HEK293 (cell line): ENCODE measurements at regions of chr6 and their contacts with region 1.

Region 1: DNA sequence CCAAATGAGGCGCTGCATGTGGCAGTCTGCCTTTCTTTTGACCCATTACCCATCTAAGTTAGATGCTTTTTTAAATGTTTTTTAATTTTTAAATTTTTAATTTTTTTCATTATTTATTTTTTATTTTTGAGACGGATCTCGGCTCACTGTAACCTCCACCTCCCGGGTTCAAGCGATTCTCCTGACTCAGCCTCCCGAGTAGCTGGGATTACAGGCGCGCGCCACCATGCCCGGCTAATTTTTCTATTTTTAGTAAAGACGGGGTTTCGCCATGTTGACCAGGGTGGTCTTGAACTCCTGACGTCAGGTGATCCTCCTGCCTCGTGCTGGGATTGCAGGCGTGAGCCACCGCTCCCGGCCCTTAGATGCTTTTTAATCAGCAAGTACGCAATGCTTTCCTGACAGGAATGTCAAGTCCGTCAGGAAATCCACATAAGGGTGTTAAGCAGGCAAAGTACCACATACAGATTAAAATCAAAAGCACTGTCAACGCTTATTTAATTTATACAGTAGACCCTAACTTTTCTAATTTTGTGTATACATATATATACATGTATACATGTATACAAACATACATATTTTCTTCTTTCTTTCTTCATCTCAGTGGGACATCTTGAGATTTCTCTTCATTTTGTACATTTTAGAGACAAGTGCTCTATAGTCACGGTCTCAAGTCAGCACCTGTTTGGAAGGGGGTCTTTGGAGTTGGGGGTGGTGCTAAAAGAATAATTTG is 995 bp upstream of the GSTA4 start:
- H3K4me3 ChIP-seq: peak overlapping the region; percentile 33
- H3K27ac ChIP-seq: no peak overlapping the region
- H3K4me1 ChIP-seq: no peaks in the 10 kb centered on the region
- CTCF ChIP-seq: no peak

Region 2: GRCh38 chr6:52984247-52984646 is 11.8 kb before region 1 on chr6:
- CTCF ChIA-PET with region 1: interaction called, 22 read pairs
- POLR2A ChIA-PET with region 1: interaction called, 9 read pairs
- H3K4me3 ChIP-seq: no peak overlapping the region
- H3K27ac ChIP-seq: no peak overlapping the region
- H3K4me1 ChIP-seq: no peaks in the 10 kb centered on the region
- CTCF ChIP-seq: no peak

Region 3: GRCh38 chr6:53035549-53036213 is 39.6 kb after region 1 on chr6:
- CTCF ChIA-PET with region 1: no interaction called
- POLR2A ChIA-PET with region 1: no interaction called
- H3K4me3 ChIP-seq: no peak overlapping the region
- H3K27ac ChIP-seq: no peak overlapping the region
- H3K4me1 ChIP-seq: no peaks in the 10 kb centered on the region
- CTCF ChIP-seq: no peak

Region 4: DNA sequence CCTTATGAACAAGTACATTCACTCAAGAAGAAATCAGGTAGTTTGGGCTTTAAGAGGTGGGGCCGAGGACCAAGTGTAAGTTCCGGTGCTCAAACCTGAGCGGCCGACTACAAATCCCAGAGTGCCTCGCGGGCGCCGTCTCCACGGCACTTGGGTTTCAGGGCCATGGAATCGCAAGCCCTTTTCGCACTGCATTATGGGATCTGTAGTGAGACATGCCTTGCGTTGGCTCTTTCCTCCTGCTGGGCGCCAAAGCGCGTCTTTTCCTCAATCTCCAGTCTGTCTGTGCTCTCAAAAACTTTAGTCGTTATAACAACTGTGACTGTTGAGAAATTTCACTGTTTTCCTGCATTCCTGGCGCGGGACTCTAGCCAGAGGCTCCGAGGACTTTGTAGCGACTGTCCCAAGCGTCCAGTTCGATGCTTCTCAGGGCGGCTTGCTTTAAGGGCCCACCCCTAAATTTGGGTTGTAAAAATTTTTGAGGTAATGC is 68.7 kb after region 1 on chr6:
- CTCF ChIA-PET with region 1: interaction called, 20 read pairs
- POLR2A ChIA-PET with region 1: interaction called, 32 read pairs
- H3K4me3 ChIP-seq: peak overlapping the region; percentile 92
- H3K27ac ChIP-seq: peak overlapping the region; percentile 89
- H3K4me1 ChIP-seq: peaks cover 23% of the 10 kb centered on the region
- CTCF ChIP-seq: no peak

Region 5: DNA sequence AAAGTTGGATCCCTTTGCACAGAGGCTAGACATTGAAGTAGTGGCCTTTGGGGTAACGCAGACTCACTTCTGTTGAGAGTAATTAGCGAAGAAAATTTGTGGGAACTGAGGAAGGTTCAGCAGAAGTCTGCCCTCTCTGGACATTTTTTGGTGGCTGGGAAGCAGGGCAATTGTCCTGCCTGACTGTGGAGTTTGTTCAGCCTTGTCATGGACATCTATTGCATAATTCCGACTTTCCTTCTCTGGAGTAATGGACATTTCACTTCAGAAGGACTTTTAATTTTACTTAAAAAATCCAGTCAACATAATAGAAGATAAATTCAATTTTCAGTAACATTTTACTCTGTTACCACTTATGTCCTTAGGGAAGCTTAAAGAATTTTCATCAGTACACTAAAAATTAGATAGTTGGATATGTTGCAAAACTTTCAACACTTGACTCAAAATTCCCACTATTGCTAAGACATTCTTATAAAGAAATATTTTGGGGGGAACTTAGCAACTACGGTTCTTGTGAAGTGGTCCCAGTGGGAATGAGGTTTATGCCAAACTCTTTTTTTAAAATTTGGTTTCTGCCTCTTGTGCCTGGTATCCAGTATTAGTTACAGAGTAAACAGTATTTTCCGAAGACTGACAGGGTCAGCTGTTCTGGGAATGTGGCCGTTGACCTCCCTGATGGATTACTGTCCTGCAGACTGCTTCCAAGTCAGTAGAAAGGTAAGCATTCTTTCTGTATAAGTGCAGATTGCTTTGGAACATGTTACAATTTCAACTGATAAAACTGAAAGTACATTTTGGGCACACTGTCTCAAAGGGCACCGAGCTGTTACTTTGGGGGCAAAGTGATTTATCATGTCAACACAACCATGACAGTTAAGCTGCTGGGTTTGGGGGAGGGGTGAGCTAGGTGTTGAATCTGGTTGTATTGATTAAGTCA is 1014.5 kb after region 1 on chr6:
- CTCF ChIA-PET with region 1: no interaction called
- POLR2A ChIA-PET with region 1: no interaction called
- H3K4me3 ChIP-seq: no peak overlapping the region
- H3K27ac ChIP-seq: no peak overlapping the region
- H3K4me1 ChIP-seq: no peaks in the 10 kb centered on the region
- CTCF ChIP-seq: no peak